Mammary epithelial cell (primary cell): ENCODE measurements at regions of chr9 and their contacts with region 1.

Region 1: DNA sequence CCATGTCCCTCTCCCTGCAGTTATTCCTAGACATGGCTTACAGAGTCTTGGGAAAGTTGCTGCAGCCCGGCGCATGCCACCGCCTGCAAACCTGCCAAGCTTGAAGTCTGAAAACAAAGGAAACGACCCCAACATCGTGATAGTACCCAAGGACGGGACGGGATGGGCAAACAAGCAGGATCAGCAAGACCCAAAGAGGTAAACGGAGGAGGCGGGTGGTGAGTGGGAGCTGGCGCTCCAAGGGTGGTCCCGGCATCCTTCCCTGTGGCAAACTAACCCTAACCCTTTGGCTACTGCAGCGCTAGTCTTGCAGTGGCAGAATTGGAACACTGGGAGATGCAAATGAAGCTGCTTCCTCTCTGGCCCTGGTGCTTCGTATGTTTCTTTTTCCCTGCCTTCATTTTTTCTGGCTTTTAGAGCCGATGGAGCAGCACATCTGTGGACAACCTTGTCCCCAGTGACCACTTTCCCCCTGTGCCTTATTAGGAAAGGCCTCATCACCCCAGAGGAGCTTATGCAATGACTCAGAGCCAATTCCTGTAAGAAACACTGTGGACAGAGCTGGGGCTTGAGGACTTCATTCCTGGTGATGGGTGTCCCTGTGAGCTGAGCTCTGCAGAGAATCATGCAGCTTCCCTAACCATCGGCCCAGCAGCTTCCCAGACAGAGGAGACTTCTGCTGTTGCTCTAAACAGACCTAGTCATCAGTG is 38.9 kb downstream of the PRRC2B start:
- DNase-seq: peak; percentile 51
- H3K4me3 ChIP-seq: no peak overlapping the region
- H3K27ac ChIP-seq: no peak overlapping the region
- H3K4me1 ChIP-seq: peaks cover 25% of the 10 kb centered on the region
- H3K27me3 ChIP-seq: no peaks in the 10 kb centered on the region
- CTCF ChIP-seq: no peak

Region 2: GRCh38 chr9:131125128-131126058 is 307.4 kb before region 1 on chr9 and contains the start of gene NUP214:
- CTCF ChIA-PET with region 1: no interaction called
- dilution Hi-C with region 1: loop called (anchors 25 kb)
- in situ Hi-C with region 1: no loop called
- intact Hi-C with region 1: no loop called
- DNase-seq: peak; percentile 98
- H3K4me3 ChIP-seq: peak within 1 kb of the TSS; percentile 54 to 83 (median 80)
- H3K27ac ChIP-seq: peak within 1 kb of the TSS; percentile 69
- H3K4me1 ChIP-seq: peaks cover 9% of the 10 kb centered on the region
- H3K27me3 ChIP-seq: no peaks in the 10 kb centered on the region
- CTCF ChIP-seq: no peak
- total RNA-seq, gene NUP214: 17.2 to 42.5 TPM